Transverse colon (tissue), 4 donors: ENCODE measurements at regions of chr10 and their contacts with region 1.

Region 1: GRCh38 chr10:69639291-69640195 is 9.5 kb downstream of the FAM241B start:
- DNase-seq: peak; percentile 65
- H3K4me3 ChIP-seq: no peak overlapping the region
- H3K27ac ChIP-seq: no peak overlapping the region
- H3K4me1 ChIP-seq: no peaks in the 10 kb centered on the region
- H3K27me3 ChIP-seq: peaks cover 8% of the 10 kb centered on the region
- CTCF ChIP-seq: peak; percentile 83 to 88 (median 86)
- EP300 ChIP-seq: no peak
- POLR2A ChIP-seq: no peak

Region 2: GRCh38 chr10:69237528-69238159 is 401.9 kb before region 1 on chr10:
- in situ Hi-C with region 1: loop called in 1 of 4 experiments (anchors 25 kb)
- intact Hi-C with region 1: no loop called
- DNase-seq: peak; percentile 92
- H3K4me3 ChIP-seq: no peak overlapping the region
- H3K27ac ChIP-seq: no peak overlapping the region
- H3K4me1 ChIP-seq: peaks cover 0 to 20% (median 6%) of the 10 kb centered on the region in 4 donors
- H3K27me3 ChIP-seq: no peaks in the 10 kb centered on the region
- CTCF ChIP-seq: peak; percentile 86 to 99 (median 90)
- EP300 ChIP-seq: no peak
- POLR2A ChIP-seq: no peak

Region 3: GRCh38 chr10:69262292-69262751 is 377.2 kb before region 1 on chr10:
- in situ Hi-C with region 1: loop called in 1 of 4 experiments (anchors 25 kb)
- intact Hi-C with region 1: no loop called
- DNase-seq: no peak
- H3K4me3 ChIP-seq: no peak overlapping the region
- H3K27ac ChIP-seq: no peak overlapping the region
- H3K4me1 ChIP-seq: no peaks in the 10 kb centered on the region
- H3K27me3 ChIP-seq: no peaks in the 10 kb centered on the region
- CTCF ChIP-seq: no peak
- EP300 ChIP-seq: no peak
- POLR2A ChIP-seq: no peak

Region 4: DNA sequence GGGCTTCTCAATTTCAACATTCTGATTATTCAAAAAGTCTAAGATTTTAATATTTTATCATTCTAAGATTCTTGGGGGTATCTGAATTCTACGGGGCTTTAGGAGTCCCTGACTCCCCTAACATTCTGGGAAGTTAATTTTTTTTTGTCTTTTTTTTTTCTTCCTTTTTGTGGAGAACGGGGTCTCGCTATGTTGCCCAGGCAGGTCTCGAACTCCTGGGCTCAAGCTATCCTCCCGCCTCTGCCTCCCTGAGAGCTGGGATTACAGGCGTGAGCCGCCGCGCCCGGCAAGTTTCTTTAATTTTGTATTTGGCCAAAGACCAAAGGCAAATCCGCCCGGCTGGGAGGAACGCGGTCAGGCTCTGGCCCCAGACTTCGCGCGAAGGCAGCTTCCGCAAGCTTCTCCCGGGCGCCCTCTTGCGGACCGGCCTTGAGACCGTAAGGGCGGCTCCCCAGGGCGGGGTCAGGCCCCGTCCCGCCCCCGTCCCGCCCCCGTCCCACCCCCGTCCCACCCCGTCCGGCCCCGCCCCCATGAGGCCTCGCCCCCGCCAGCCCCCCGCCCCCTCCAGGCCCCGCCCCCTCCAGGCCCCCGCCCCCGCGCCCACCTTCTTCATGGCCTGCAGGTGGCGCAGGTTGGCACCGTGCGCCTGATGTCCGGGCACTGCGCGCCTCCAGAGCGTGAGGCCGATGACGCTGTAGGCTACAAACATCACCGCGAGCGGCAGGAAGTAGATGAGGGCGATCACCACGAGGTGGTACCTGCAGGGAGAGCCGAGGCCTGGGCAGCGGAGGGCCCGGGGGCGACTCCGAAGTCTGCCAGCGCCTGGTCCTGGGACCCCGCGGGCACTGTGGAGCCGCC is 231.0 kb before region 1 on chr10:
- in situ Hi-C with region 1: loop called (anchors 10 to 25 kb)
- intact Hi-C with region 1: no loop called
- DNase-seq: peak; percentile 97
- H3K4me3 ChIP-seq: peak overlapping the region in 3 of 4 donors; percentile 4 to 32 (median 27)
- H3K27ac ChIP-seq: peak overlapping the region; percentile 88 to 94 (median 92)
- H3K4me1 ChIP-seq: peaks cover 13 to 52% (median 24%) of the 10 kb centered on the region in 4 donors
- H3K27me3 ChIP-seq: no peaks in the 10 kb centered on the region
- CTCF ChIP-seq: peak; percentile 71 to 87 (median 74)
- EP300 ChIP-seq: no peak
- POLR2A ChIP-seq: peak; percentile 33

Region 5: DNA sequence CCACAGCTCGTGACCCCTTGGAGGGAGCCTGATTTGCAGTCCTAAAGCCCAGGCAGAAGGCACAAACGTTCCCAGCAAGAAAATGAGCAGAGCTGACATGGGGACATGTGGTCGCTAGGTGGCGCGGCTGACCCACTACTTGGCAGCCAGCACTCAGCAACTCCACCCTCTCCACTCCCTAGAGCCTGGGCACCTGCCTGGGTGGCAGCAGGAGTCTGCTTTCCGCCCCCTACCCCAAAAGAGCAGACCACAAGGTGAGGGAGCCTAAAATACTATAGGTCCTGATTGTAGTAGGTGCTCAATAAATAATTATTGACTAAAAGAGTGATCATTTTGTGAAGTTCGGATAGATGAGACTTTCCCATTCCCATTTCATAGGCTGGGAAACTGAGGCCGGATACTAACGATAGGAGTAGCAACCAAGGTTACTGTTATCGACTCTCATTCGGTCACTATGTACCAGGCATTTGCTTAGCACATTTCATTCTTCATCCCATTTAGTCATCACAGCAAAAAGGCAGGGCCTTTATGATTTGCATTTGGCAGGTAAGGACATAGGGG is 123.8 kb before region 1 on chr10:
- in situ Hi-C with region 1: loop called (anchors 5 to 25 kb)
- intact Hi-C with region 1: loop called (anchors 5 kb)
- DNase-seq: peak; percentile 77
- H3K4me3 ChIP-seq: no peak overlapping the region
- H3K27ac ChIP-seq: no peak overlapping the region
- H3K4me1 ChIP-seq: no peaks in the 10 kb centered on the region
- H3K27me3 ChIP-seq: no peaks in the 10 kb centered on the region
- CTCF ChIP-seq: peak; percentile 72 to 86 (median 82)
- EP300 ChIP-seq: no peak
- POLR2A ChIP-seq: no peak

Region 6: GRCh38 chr10:69549959-69550358 is 89.6 kb before region 1 on chr10:
- in situ Hi-C with region 1: no loop called
- intact Hi-C with region 1: no loop called
- DNase-seq: no peak
- H3K4me3 ChIP-seq: no peak overlapping the region
- H3K27ac ChIP-seq: no peak overlapping the region
- H3K4me1 ChIP-seq: no peaks in the 10 kb centered on the region
- H3K27me3 ChIP-seq: peaks cover 11% of the 10 kb centered on the region
- CTCF ChIP-seq: no peak
- EP300 ChIP-seq: no peak
- POLR2A ChIP-seq: no peak

Region 7: DNA sequence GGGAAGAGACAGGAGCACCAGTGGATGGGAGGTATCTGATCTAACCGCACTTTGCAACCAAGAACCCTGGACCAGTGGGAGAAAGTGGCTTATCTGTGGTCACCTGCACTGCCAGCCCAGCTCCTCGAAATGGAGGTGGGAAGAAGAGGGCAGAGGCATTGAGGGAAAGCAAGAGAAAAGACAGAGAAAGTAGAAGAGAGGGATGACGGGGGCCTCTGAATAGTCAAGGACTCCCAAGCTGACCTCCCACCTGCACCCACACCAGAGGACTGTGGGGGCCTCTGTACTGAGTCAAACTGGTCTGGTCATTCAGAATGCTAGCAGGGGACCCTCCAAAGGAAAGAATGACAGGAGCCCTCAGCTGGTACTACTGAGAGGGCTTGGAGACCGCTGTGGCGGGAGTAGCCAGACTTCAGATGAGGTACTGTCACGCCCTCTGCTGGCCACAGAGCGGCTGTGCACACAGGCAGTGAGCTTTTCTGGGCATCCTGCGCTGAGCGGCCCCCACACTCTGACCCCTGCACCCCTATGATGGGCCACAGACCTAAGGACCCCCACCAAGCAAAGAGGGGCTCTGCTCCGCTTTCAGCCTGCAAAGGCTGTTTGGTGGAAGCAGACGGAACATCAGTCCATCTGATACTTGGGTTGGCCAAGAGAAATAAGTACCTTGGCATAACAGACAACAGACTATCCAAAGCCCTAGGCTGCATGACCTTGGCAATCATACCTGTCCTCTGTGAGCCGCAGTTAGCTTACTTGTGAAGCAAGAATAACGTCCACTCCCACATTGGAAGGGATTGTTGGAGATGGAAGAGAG is 275.1 kb after region 1 on chr10:
- in situ Hi-C with region 1: no loop called
- intact Hi-C with region 1: loop called (anchors 5 kb)
- DNase-seq: peak; percentile 78
- H3K4me3 ChIP-seq: no peak overlapping the region
- H3K27ac ChIP-seq: no peak overlapping the region
- H3K4me1 ChIP-seq: peaks cover 17 to 40% (median 26%) of the 10 kb centered on the region in 4 donors
- H3K27me3 ChIP-seq: no peaks in the 10 kb centered on the region
- CTCF ChIP-seq: peak; percentile 92 to 97 (median 95)
- EP300 ChIP-seq: no peak
- POLR2A ChIP-seq: no peak